Dorsolateral prefrontal cortex (tissue), 120 donors: ENCODE measurements at regions of chr3 and their contacts with region 1.

Region 1: GRCh38 chr3:48556793-48557626 is at the start of gene PFKFB4:
- DNase-seq: peak; percentile 99 to 100 (median 99)
- H3K4me3 ChIP-seq: peak within 1 kb of the TSS; percentile 59 to 99 (median 78)
- H3K27ac ChIP-seq: peak within 1 kb of the TSS; percentile 24 to 95 (median 87)
- H3K27me3 ChIP-seq: no peaks in the 10 kb centered on the region
- CTCF ChIP-seq: peak in 45 of 56 donors; percentile 6 to 59 (median 37)
- total RNA-seq, gene PFKFB4: 5.9 to 24.4 (median 12.7) TPM

Region 2: DNA sequence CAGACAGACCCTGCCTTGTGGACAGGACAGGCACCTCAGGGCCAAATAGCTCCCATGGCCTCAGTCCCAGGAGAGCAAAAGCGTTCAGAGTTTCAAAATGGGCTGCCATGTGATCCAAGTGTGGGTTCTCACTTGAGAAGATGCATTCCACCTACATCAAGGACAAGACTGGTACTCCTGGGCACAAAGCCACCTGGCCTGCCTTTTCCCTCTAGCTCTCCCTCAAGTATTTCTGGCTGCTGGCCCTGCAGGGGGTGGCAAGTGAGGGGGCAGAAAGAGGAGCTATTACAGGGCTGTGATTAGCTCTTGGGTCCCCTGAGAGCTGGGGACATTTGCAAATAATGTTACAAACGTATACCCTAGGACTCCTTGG is 44.6 kb after region 1 on chr3:
- intact Hi-C with region 1: loop called in 1 of 2 experiments (anchors 5 kb)
- DNase-seq: peak in 6 of 10 donors; percentile 31 to 84 (median 70)
- H3K4me3 ChIP-seq: no peak overlapping the region
- H3K27ac ChIP-seq: no peak overlapping the region
- H3K27me3 ChIP-seq: no peaks in the 10 kb centered on the region
- CTCF ChIP-seq: no peak

Region 3: GRCh38 chr3:48609088-48610005 is 52.3 kb after region 1 on chr3 and contains the start of gene UQCRC1:
- intact Hi-C with region 1: loop called (anchors 2 to 5 kb)
- DNase-seq: peak; percentile 83 to 95 (median 87)
- H3K4me3 ChIP-seq: peak within 1 kb of the TSS; percentile 63 to 100 (median 97)
- H3K27ac ChIP-seq: peak within 1 kb of the TSS; percentile 36 to 96 (median 85)
- H3K27me3 ChIP-seq: no peaks in the 10 kb centered on the region
- CTCF ChIP-seq: peak; percentile 23 to 95 (median 86)
- total RNA-seq, gene UQCRC1: 75.3 to 310 (median 207) TPM

Region 4: GRCh38 chr3:48635222-48636021 is 78.4 kb after region 1 on chr3 and contains the start of gene SLC26A6:
- intact Hi-C with region 1: loop called in 1 of 2 experiments (anchors 2 kb)
- DNase-seq: peak; percentile 95 to 99 (median 96)
- H3K4me3 ChIP-seq: peak within 1 kb of the TSS; percentile 71 to 99 (median 90)
- H3K27ac ChIP-seq: peak within 1 kb of the TSS in 52 of 59 donors; percentile 18 to 89 (median 74)
- H3K27me3 ChIP-seq: no peaks in the 10 kb centered on the region
- CTCF ChIP-seq: peak in 55 of 56 donors; percentile 33 to 82 (median 62)
- total RNA-seq, gene SLC26A6: 5.6 to 28.6 (median 13.1) TPM

Region 5: GRCh38 chr3:48663415-48664312 is 106.7 kb after region 1 on chr3:
- intact Hi-C with region 1: loop called in 1 of 2 experiments (anchors 10 kb)
- DNase-seq: peak; percentile 90 to 98 (median 97)
- H3K4me3 ChIP-seq: peak overlapping the region; percentile 48 to 89 (median 71)
- H3K27ac ChIP-seq: peak overlapping the region; percentile 11 to 96 (median 88)
- H3K27me3 ChIP-seq: peaks cover 0 to 5% (median 0%) of the 10 kb centered on the region in 45 donors
- CTCF ChIP-seq: peak; percentile 44 to 93 (median 80)

Region 6: DNA sequence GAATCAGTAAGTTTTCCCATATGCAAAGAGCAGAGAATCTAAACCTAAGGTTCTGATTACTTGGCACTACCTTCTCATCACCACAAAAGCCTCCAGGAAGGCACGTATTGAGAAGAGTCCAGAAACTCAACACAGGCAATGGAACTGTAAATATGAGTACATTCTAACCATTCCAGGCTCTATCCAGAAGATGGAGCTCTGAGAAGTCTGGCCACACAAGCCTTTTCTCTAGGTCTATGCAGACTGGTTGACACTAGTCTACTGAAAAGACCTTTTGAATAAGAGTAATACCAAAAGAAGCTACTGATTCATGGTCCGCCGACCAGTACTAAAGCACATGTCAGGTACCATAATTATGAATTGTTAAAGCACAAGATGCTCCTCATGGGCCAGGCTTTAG is 140.9 kb after region 1 on chr3:
- intact Hi-C with region 1: no loop called
- DNase-seq: no peak
- H3K4me3 ChIP-seq: no peak overlapping the region
- H3K27ac ChIP-seq: peak overlapping the region in 32 of 59 donors; percentile 0 to 97 (median 36)
- H3K27me3 ChIP-seq: no peaks in the 10 kb centered on the region
- CTCF ChIP-seq: peak in 10 of 56 donors; percentile 9 to 30 (median 22)

Region 7: DNA sequence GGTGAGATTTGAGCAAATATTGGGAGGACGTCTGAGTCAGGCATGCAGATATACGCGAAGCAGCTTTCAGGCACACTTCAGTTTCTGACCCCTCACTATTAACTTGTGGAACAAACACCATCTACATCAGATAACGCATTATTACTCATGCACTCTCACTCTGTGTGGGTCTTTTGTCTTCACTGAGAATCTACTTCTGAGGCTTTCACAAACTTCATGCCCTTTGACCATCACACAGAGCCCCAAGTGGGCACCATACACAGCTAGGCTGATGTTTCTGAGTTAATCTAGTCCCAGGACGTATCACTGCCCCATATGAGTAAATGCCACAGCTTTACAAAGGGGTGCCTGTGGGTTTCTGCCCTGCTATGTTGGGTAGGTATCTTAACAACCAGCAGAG is 199.6 kb after region 1 on chr3:
- intact Hi-C with region 1: no loop called
- DNase-seq: peak in 1 of 10 donors; percentile 23
- H3K4me3 ChIP-seq: no peak overlapping the region
- H3K27ac ChIP-seq: peak overlapping the region in 50 of 59 donors; percentile 0 to 88 (median 62)
- H3K27me3 ChIP-seq: no peaks in the 10 kb centered on the region
- CTCF ChIP-seq: no peak

Region 8: DNA sequence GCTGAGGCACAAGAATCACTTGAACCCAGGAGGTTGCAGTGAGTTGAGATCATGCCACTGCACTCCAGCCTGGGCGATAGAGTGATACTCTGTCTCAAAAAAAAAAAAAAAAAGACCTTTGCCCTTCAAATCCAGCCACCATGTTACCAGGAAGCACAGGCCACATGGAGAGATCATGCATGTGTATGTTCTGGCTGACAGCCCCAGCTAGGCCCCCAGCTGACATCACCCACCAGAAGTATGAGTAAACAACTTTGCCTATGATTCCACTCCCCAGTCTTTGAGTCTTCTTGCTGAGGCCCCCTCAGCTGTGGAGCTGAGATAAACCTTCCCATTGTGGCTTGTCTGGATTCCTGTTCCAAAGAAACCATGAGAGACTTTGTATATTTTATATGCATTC is 358.3 kb after region 1 on chr3:
- intact Hi-C with region 1: no loop called
- DNase-seq: no peak
- H3K4me3 ChIP-seq: no peak overlapping the region
- H3K27ac ChIP-seq: no peak overlapping the region
- H3K27me3 ChIP-seq: no peaks in the 10 kb centered on the region
- CTCF ChIP-seq: no peak